Activated T-helper 2 cell treated with anti-CD3 and anti-CD28 coated beads, Interferon-gamma antibody, Interleukin-2, Interleukin-4, amounts not matched to agents 10 μg/mL and 5 μg/mL and 100 μg/mL, durations not matched to agents 14 hours and 24 hours and 36 hours (primary cell): ENCODE measurements at regions of chr21 and their contacts with region 1.

Region 1: DNA sequence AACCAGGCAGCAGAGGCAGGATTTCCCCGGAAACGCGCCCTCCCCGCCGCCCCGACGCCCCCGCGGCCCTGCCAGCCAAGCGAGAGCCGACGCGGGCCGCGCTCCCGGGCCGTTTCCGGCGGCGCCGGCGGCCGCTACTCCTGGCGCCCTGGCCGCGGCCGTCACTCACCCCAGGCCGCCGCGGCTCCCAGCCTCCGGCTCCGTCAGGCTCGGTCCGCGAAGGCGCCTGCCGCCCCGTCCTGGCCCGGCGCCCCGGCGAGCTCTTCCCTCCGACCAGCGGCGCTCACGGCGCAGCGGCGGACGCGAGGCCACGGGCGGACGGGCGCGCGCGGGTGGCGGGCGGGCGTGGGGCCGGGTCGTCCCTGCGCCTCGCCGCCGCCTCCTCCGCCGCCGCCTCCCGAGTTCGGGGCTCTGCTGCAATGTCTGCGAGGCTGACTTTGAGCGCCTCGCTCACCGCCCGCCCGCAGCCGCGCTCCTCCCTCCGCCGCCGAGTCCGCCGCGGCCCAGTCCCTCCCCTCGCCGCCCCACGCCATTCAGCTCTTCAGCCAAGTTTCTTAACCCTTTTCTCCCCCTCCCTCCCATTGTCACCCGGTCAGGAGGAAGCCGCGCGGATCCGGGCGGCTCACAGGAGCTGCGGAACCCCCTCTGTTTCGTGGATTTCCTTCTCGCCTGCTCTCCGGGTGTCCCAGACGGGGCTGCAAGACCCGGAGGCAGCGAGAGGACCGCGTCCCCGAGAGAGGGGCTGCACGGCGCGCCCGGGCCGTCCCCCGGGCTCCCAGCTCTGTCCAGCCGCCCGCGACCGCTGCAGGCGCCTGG is at the start of gene NRIP1:
- DNase-seq: peak; percentile 73
- H3K4me3 Mint-ChIP-seq: peak within 1 kb of the TSS; percentile 93
- H3K27ac Mint-ChIP-seq: peak within 1 kb of the TSS; percentile 87
- H3K4me1 Mint-ChIP-seq: peaks cover 40% of the 10 kb centered on the region
- H3K27me3 Mint-ChIP-seq: peaks cover 53% of the 10 kb centered on the region
- total RNA-seq, gene NRIP1: 7.9 and 8.3 TPM in 2 replicates

Region 2: DNA sequence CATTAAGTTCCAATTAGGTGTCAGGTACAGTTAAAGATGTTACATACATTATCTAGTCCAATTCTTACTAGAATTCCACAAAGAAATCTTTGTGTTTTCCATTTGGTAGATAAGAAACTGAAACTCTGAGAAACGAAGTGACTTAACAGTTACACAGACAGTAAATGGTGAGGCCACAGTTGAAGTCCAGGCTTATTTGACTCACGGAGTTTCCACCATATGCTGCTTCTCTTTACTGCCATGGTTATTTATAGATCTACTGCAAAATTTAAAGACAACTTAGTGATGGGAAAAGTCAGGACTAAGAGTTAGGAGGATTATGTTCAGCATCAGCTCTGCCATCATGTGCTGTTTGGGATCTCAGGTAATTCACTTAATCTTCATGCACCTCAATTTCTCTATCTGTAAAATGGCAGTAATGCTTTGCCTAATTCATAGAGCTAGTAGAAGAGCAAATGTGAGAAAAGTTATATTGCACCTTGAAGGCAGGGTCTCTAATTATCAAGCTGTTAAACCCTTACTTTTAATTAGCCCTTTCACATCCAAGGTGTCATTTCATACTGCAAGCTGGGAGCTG is 492.5 kb before region 1 on chr21:
- intact Hi-C with region 1: loop called (anchors 10 kb)
- DNase-seq: no peak
- H3K4me3 Mint-ChIP-seq: no peak overlapping the region
- H3K27ac Mint-ChIP-seq: peak overlapping the region; percentile 90
- H3K4me1 Mint-ChIP-seq: peaks cover 53% of the 10 kb centered on the region
- H3K27me3 Mint-ChIP-seq: no peaks in the 10 kb centered on the region

Region 3: DNA sequence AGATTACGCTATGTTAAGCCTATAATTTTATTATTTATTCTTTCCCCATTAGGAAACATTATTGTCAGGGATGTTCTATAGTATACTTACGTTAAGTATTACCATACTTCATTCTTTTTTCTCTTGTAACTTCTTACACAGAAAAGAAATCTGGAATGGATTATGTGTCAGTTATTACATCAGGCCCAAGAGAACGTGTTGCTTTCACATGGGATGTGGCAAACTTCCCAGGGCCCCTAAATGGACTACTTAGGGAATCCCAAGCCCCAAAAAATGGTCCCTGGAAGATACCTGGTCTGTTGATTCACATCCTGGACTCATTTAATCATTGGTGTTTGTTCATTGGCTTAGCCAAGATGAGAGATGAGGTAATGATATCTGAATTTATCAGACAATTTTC is 249.8 kb before region 1 on chr21:
- intact Hi-C with region 1: no loop called
- DNase-seq: no peak
- H3K4me3 Mint-ChIP-seq: no peak overlapping the region
- H3K27ac Mint-ChIP-seq: no peak overlapping the region
- H3K4me1 Mint-ChIP-seq: peaks cover 3% of the 10 kb centered on the region
- H3K27me3 Mint-ChIP-seq: peaks cover 1% of the 10 kb centered on the region

Region 4: GRCh38 chr21:15051644-15052458 is 12.9 kb before region 1 on chr21:
- intact Hi-C with region 1: loop called (anchors 2 kb)
- DNase-seq: no peak
- H3K4me3 Mint-ChIP-seq: peak overlapping the region; percentile 67
- H3K27ac Mint-ChIP-seq: peak overlapping the region; percentile 75
- H3K4me1 Mint-ChIP-seq: peaks cover 39% of the 10 kb centered on the region
- H3K27me3 Mint-ChIP-seq: no peaks in the 10 kb centered on the region

Region 5: DNA sequence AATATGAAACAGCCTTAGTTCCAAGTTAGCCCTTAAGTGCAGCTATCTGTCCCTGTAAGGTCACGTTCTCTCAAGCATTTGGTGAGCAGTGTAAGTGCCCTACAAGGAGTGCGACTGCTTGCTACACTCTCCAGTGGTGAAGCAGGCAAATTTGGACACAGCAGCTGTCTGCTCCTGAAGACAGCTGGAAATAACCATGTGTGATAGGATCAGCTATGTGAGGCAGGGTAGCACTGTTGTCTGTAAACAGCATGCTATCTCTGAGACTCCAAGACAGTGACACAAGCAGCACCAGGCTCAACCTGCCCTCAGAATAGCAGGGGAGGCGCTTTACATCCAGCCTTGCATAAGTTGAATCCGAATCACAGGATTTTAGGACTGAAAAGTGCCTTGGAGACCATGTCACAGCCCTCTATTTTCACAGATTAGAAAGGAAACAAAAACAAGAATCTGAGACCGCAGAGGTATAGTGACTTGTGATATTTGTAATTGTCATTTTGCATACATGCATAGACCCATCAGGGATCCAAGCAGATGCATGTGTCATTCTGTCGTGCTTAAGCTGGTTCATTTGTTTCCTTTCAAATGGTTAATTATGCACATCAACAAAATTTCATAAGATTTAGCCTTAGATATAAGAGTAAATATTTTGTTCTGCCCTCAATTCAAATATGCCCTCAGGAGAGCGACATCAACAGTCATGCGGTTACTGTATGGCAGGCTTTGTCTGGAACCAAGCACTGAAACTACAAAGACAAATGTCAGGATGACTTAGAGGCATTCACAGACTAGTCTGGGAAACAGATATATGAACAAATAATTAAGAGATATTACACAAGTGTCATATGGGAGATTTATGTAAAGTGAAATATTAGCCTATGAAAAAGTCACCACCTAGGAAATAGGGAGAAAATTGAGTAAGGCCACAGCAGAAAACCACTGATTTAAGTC is 134.9 kb after region 1 on chr21:
- intact Hi-C with region 1: no loop called
- DNase-seq: no peak
- H3K4me3 Mint-ChIP-seq: no peak overlapping the region
- H3K27ac Mint-ChIP-seq: no peak overlapping the region
- H3K4me1 Mint-ChIP-seq: no peaks in the 10 kb centered on the region
- H3K27me3 Mint-ChIP-seq: no peaks in the 10 kb centered on the region

Region 6: GRCh38 chr21:15483138-15483780 is 418.5 kb after region 1 on chr21:
- intact Hi-C with region 1: loop called (anchors 2 kb)
- DNase-seq: peak; percentile 63
- H3K4me3 Mint-ChIP-seq: no peak overlapping the region
- H3K27ac Mint-ChIP-seq: no peak overlapping the region
- H3K4me1 Mint-ChIP-seq: peaks cover 13% of the 10 kb centered on the region
- H3K27me3 Mint-ChIP-seq: peaks cover 7% of the 10 kb centered on the region

Region 7: GRCh38 chr21:15729674-15730483 is 665.1 kb after region 1 on chr21 and contains the start of gene USP25:
- intact Hi-C with region 1: loop called (anchors 5 kb)
- DNase-seq: peak; percentile 74
- H3K4me3 Mint-ChIP-seq: peak within 1 kb of the TSS; percentile 92
- H3K27ac Mint-ChIP-seq: peak within 1 kb of the TSS; percentile 84
- H3K4me1 Mint-ChIP-seq: peaks cover 18% of the 10 kb centered on the region
- H3K27me3 Mint-ChIP-seq: peaks cover 21% of the 10 kb centered on the region
- total RNA-seq, gene USP25: 21.7 and 25.8 TPM in 2 replicates